Right lobe of liver (tissue), 6 donors: ENCODE measurements at regions of chr11 and their contacts with region 1.

Region 1: GRCh38 chr11:71139516-71140205 is 112.7 kb downstream of the SHANK2 start:
- DNase-seq: peak; percentile 83 to 85 (median 83)
- ATAC-seq: peak; percentile 89 to 96 (median 91)
- H3K4me3 ChIP-seq: no peak overlapping the region
- H3K27ac ChIP-seq: peak overlapping the region in 1 of 3 donors; percentile 21
- H3K4me1 ChIP-seq: peaks cover 0 to 11% (median 3%) of the 10 kb centered on the region in 4 donors
- H3K27me3 ChIP-seq: no peaks in the 10 kb centered on the region
- CTCF ChIP-seq: no peak
- POLR2A ChIP-seq: no peak

Region 2: DNA sequence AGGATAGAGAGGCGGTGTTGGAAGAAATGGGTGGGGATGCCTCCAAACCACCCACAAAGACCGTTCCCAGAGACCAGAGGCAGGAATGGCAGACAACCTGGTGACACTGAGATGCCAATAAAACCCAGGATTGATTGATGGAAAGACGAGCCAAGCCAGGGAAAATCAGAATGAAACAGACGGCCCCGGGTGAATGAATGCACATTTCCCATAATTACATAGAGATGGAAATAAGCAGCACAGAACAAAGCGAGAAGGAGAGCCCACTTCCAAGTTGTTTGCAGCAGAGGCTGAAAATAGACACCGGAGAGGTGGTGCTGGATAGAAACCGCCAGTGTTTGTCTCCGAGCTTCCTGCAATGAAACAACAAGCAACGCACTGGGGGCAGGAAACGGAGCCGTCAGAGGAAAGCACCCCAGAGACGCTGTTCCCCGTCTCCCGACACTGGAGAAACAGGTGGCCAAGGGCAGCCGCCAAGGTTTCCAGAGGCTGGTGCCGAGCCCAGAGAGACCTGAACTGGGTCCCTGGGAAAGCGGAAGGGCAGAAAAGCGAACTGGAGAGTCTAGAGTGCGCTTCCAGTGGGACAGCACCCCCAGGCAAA is 294.0 kb before region 1 on chr11:
- intact Hi-C with region 1: no loop called
- DNase-seq: no peak
- ATAC-seq: no peak
- H3K4me3 ChIP-seq: no peak overlapping the region
- H3K27ac ChIP-seq: no peak overlapping the region
- H3K4me1 ChIP-seq: no peaks in the 10 kb centered on the region
- H3K27me3 ChIP-seq: no peaks in the 10 kb centered on the region
- CTCF ChIP-seq: no peak
- POLR2A ChIP-seq: no peak

Region 3: GRCh38 chr11:71086675-71087258 is 52.9 kb before region 1 on chr11:
- intact Hi-C with region 1: no loop called
- DNase-seq: peak in 1 of 3 donors; percentile 38
- ATAC-seq: peak; percentile 74 to 87 (median 83)
- H3K4me3 ChIP-seq: no peak overlapping the region
- H3K27ac ChIP-seq: no peak overlapping the region
- H3K4me1 ChIP-seq: no peaks in the 10 kb centered on the region
- H3K27me3 ChIP-seq: no peaks in the 10 kb centered on the region
- CTCF ChIP-seq: peak; percentile 39 to 62 (median 52)
- POLR2A ChIP-seq: no peak

Region 4: DNA sequence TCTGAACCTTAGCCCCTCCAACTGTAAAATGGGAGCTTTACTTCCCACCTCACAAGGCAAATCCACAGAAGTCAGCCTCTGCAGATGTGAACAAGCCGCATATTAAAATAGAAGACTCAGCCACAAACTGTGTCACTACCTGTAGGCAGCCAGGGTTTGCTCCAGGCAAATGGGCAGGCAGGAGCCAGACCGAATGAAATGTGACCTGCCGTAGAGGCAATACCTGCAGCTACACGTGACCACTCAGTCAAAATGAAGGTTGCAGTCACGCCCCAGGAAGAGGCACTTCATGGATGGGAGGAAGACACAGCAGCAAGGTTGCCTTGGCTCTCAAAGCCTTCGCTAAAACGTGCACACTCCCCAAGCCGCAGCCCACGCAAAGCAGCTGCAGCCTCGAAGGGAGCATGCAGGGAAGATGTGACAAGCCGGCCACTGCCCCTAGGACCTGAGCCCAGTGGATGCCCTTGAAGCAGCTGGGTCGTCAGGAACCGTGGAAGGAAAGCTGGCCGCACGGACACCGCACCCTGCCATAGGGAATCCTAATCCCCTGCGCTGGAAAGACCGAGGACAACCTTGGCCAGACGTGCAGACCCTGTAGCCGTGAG is 59.7 kb after region 1 on chr11:
- intact Hi-C with region 1: loop called in 1 of 2 experiments (anchors 10 kb)
- DNase-seq: no peak
- ATAC-seq: no peak
- H3K4me3 ChIP-seq: no peak overlapping the region
- H3K27ac ChIP-seq: no peak overlapping the region
- H3K4me1 ChIP-seq: peaks cover 0 to 14% (median 6%) of the 10 kb centered on the region in 4 donors
- H3K27me3 ChIP-seq: no peaks in the 10 kb centered on the region
- CTCF ChIP-seq: no peak
- POLR2A ChIP-seq: no peak